ENCODE measurements at regions of chr12 and their contacts with region 1.

Region 1: GRCh38 chr12:110888256-110888991 is 32.0 kb downstream of the MYL2 start:
- DNase-seq: no peak
- ATAC-seq: no peak
- H3K4me3 ChIP-seq: peak overlapping the region in 2 of 4 donors; percentile 45 to 58
- H3K27ac ChIP-seq: peak overlapping the region in 1 of 4 donors; percentile 58
- H3K4me1 ChIP-seq: no peaks in the 10 kb centered on the region
- H3K27me3 ChIP-seq: no peaks in the 10 kb centered on the region
- CTCF ChIP-seq: peak in 1 of 5 experiments; percentile 8
- POLR2A ChIP-seq: no peak

Region 2: DNA sequence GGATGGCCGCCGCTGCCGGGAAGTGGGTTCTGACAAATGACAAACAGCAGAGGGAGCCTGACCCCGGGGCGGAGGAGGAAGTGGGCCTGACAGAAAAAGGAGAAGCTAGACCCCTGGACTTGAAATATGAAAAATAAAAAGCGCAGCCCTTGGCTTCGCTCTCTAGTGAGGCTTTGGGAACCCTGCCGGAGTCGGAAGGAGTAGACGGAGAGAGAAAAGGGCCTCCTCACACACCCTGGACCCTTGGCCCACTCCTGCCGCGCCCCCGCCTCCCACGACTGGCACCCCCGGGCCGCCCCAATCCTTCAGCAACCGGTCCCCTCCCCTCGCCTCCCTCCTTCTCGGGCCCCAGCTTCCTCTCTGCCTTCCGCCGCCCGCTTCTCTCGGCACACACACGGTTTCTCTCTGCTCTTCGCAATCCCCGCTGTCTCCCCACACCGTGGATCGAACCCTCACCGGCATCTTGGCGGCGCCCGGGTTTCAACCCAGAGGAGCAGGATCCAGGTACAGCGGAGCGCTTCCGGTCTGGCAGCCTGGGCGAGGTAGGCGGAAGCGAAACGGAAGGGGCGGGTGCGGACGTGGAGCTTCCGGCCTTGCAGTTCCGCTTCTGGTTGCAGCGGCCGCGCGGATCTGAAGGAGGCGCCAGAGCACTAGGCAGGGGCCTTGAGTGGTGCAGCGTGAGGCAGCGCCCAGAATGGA is 438.5 kb before region 1 on chr12 and contains the start of gene ARPC3:
- in situ Hi-C with region 1: loop called in 1 of 4 experiments (anchors 10 kb)
- intact Hi-C with region 1: loop called (anchors 5 kb)
- DNase-seq: peak; percentile 89 to 93
- ATAC-seq: peak; percentile 97 to 98
- H3K4me3 ChIP-seq: peak within 1 kb of the TSS; percentile 83 to 99 (median 92)
- H3K27ac ChIP-seq: peak within 1 kb of the TSS; percentile 86 to 97 (median 90)
- H3K4me1 ChIP-seq: peaks cover 7 to 8% of the 10 kb centered on the region in 2 donors
- H3K27me3 ChIP-seq: no peaks in the 10 kb centered on the region
- CTCF ChIP-seq: peak; percentile 81 to 95 (median 87)
- POLR2A ChIP-seq: peak; percentile 43 to 59
- total RNA-seq, gene ARPC3: 170 to 327 (median 213) TPM

Region 3: GRCh38 chr12:110501752-110502738 is 386.4 kb before region 1 on chr12 and contains the starts of genes RAD9B and VPS29:
- in situ Hi-C with region 1: loop called in 1 of 4 experiments (anchors 25 kb)
- intact Hi-C with region 1: no loop called
- DNase-seq: peak; percentile 98
- ATAC-seq: peak; percentile 91 to 94
- H3K4me3 ChIP-seq: peak within 1 kb of the TSS; percentile 86 to 99 (median 90)
- H3K27ac ChIP-seq: peak within 1 kb of the TSS; percentile 95 to 98 (median 97)
- H3K4me1 ChIP-seq: peaks cover 36 to 40% of the 10 kb centered on the region in 2 donors
- H3K27me3 ChIP-seq: no peaks in the 10 kb centered on the region
- CTCF ChIP-seq: no peak
- POLR2A ChIP-seq: peak; percentile 95 to 97
- total RNA-seq, gene RAD9B: 0.12 to 2.0 (median 0.62) TPM
- total RNA-seq, gene VPS29: 76.4 to 145 (median 92.9) TPM

Region 4: DNA sequence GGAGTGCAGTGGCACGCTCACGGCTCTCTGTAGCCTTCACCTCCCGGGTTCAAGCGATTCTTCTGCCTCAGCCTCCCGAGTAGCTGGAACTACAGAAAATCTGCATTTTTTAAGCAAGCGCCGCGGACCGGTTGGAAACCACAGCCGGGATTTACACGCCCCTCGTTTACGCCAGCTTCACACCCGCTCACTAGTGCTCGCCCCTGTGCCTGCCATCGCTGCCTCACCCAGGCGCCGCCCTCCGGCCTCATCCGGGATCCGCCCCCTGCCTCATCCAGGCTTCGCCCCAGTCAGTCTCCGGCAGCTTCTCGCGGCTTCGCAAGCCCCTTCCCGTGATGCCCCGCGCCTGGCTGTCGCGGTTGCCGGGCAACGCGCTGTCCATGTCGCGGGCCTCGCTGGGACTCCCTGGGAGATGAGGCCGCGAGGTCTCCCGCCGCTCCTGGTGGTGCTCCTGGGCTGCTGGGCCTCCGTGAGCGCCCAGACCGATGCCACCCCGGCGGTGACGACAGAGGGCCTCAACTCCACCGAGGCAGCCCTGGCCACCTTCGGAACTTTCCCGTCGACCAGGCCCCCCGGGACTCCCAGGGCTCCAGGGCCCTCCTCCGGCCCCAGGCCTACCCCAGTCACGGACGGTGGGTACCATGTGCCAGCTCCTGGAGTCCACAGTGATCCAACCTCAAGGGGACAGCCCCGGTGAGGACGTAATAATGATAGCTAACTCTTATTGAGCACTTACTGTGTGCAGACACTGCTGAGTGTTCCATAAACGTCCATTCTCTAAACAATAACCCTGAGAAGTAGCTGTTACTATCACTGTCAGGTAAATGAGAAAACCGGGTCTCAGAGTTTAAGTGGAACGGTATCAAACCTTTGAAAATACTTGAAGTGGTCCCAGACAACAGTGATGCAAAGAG is 274.4 kb before region 1 on chr12 and contains the start of gene TCTN1:
- in situ Hi-C with region 1: loop called in 1 of 4 experiments (anchors 10 kb)
- intact Hi-C with region 1: loop called (anchors 10 kb)
- DNase-seq: peak; percentile 93 to 95
- ATAC-seq: peak; percentile 94 to 97
- H3K4me3 ChIP-seq: peak within 1 kb of the TSS; percentile 67 to 94 (median 86)
- H3K27ac ChIP-seq: peak within 1 kb of the TSS; percentile 55 to 82 (median 70)
- H3K4me1 ChIP-seq: peaks cover 10 to 12% of the 10 kb centered on the region in 2 donors
- H3K27me3 ChIP-seq: no peaks in the 10 kb centered on the region
- CTCF ChIP-seq: peak in 1 of 5 experiments; percentile 23
- POLR2A ChIP-seq: peak; percentile 55 to 66
- total RNA-seq, gene TCTN1: 4.7 to 30.8 (median 22.7) TPM

Region 5: GRCh38 chr12:110846615-110847566 is 41.5 kb before region 1 on chr12 and contains the start of gene CCDC63:
- in situ Hi-C with region 1: no loop called
- intact Hi-C with region 1: loop called (anchors 5 kb)
- DNase-seq: peak; percentile 27 to 28
- ATAC-seq: peak; percentile 37 to 46
- H3K4me3 ChIP-seq: peak within 1 kb of the TSS; percentile 16 to 23 (median 21)
- H3K27ac ChIP-seq: no peak within 1 kb of the TSS
- H3K4me1 ChIP-seq: peaks cover 6 to 15% of the 10 kb centered on the region in 2 donors
- H3K27me3 ChIP-seq: peaks cover 5 to 13% (median 6%) of the 10 kb centered on the region in 3 donors
- CTCF ChIP-seq: peak in 2 of 5 experiments; percentile 42 to 44
- POLR2A ChIP-seq: no peak
- total RNA-seq, gene CCDC63: not detected